Sigmoid colon (tissue), 7 donors: ENCODE measurements at regions of chr22 and their contacts with region 1.

Region 1: DNA sequence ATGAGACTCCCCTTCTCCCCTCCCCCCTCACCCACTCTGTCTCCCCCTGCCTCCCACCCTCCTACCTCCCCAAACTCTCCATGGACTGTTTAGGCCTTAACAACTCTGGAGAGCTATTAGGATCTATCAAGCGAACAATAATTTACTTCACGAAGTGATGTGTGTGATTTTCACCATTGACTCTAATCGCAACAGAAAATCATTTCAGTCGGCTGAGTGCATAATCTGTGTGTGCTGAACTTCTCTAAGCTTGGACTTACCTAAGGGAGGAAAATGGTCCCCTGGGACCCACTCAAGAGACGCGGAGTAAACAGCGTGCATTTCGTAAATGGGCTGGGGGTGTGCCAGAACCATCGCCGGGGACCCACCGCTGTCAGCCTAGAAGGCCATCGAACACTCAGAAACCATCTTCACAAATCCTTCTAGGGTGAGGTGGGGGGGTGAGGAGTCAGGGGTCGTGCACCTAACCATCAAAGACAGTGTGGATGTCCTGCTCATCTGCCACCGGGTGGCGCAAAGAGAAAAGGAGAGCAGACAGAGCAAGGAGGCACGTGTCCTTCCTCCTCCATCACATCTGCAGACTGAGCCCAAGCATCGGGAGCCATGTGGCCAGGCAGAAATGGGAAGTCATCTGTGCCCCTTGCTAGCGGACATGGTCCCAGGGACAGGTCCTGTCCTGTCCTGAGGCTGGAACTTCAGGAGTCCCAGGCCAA is 62.1 kb upstream of the NUP50 start:
- DNase-seq: peak; percentile 78
- H3K4me3 ChIP-seq: no peak overlapping the region
- H3K27ac ChIP-seq: no peak overlapping the region
- H3K4me1 ChIP-seq: no peaks in the 10 kb centered on the region
- H3K27me3 ChIP-seq: peaks cover 0 to 33% (median 19%) of the 10 kb centered on the region in 3 donors
- CTCF ChIP-seq: peak in 2 of 4 experiments; percentile 27 to 34
- EP300 ChIP-seq: no peak
- POLR2A ChIP-seq: no peak

Region 2: GRCh38 chr22:45058622-45058912 is 43.1 kb before region 1 on chr22:
- intact Hi-C with region 1: no loop called
- DNase-seq: no peak
- H3K4me3 ChIP-seq: no peak overlapping the region
- H3K27ac ChIP-seq: no peak overlapping the region
- H3K4me1 ChIP-seq: no peaks in the 10 kb centered on the region
- H3K27me3 ChIP-seq: peaks cover 0 to 14% (median 0%) of the 10 kb centered on the region in 3 donors
- CTCF ChIP-seq: no peak
- EP300 ChIP-seq: no peak
- POLR2A ChIP-seq: no peak

Region 3: DNA sequence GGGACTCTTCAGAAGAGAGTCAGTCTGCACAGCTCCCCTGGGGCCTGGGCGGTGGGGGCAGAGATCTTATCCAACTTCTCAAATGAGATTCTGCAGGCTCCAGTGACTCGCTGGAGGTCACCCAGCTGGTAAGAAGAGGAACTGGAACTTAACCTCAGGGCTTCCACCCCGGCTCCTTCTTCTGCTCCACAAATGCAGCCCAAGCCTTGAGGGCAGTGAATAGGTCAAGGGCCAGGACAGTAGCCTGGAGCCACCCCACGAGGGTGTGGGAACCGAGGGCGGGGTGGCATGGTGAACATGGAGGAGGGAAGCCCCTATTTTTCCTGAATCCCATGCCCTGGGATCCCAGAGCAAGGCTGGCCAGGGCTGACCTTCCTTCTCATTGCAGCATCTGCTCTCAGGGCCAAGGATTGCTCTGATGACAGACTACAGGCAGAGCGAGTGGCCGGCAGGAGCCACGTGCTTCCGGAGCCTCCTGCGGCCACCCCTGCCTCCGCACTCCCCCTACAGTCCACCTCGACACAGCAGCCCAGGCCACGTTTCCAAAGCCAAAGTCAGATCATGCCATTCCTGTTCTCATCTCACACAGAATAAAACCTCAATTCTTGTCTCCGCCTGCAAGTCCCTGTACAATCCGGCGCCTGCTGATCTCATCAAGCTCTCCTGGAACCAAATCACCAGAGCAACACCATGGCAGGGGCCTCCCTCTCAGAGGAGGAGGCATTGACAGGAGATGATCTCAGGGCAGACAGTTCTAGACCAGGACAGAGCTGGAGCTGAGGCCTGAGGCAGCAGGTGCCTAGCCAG is 162.0 kb after region 1 on chr22:
- intact Hi-C with region 1: loop called (anchors 5 kb)
- DNase-seq: peak; percentile 93
- H3K4me3 ChIP-seq: no peak overlapping the region
- H3K27ac ChIP-seq: peak overlapping the region in 3 of 4 donors; percentile 21 to 68 (median 34)
- H3K4me1 ChIP-seq: peaks cover 0 to 23% (median 18%) of the 10 kb centered on the region in 4 donors
- H3K27me3 ChIP-seq: no peaks in the 10 kb centered on the region
- CTCF ChIP-seq: peak; percentile 46 to 81 (median 66)
- EP300 ChIP-seq: no peak
- POLR2A ChIP-seq: no peak